ENCODE measurements at regions of chr12 and their contacts with region 1.

Region 1: GRCh38 chr12:27236498-27236897 is 7.6 kb upstream of the STK38L start:
- DNase-seq: no peak

Region 2: DNA sequence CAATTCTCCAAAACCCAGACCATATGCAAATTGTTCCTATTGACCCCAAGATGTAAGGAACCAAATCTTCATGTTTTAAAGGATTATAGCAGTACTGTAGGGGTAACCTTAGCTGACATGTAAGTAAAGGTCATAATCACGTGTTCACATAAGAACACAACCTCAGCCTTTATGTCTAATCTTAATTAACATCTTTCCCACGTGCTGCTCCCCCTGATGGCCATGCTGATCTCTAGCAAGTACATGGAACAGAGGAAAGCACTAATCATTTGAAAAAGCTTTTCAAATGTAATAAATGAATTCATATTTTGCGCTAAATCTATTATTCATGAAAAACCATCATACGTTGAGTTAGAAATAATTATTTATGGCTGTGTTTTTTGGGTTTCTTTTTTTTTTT is 373.0 kb before region 1 on chr12:
- intact Hi-C with region 1: loop called in 1 of 2 experiments (anchors 5 kb)
- DNase-seq: no peak

Region 3: DNA sequence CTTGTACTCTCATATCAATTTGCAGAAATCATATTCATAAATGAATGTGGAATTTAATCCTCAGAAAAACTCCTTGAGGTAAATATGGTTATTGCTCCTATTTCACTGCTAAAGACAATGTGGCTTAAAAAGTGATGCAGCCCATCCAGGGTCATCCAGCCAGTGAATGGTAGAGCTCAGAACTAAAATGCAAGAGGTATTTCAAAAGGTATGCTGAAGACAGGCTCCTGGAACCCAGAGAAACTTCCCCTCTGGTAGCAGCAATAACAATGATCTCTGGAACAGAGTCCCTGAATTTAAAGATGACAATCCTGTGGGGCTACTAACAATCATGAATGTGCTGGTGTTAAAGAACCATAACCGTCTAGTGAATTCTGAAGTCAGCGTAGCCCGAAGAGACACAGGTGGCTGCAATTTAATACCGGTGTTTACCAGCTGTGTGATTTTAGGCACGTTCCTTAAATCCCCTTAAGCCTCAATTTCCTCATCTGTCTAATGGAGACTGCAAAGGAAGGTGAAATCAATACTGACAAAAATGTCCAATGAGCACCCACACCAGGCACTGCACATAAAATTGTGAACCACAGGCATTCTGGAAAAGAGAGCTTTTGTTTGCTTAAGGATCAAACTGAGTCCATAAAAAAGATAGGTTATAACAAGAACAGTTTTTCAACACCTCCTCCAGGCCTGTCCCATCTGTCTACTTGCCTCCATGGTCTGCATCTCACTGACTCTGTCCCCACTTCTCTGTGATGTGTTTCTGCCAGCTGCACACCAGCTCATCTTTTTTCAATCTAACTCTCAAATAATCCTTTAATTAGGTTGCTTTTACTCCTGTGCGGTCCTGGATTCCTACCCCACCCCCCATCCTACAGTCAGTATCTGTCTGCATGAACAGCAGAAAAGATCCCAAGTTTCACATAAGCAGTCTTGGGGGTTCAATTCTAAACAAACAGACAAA is 232.8 kb before region 1 on chr12:
- intact Hi-C with region 1: no loop called
- DNase-seq: no peak

Region 4: GRCh38 chr12:27142101-27142721 is 94.3 kb before region 1 on chr12:
- intact Hi-C with region 1: no loop called
- DNase-seq: peak; percentile 82

Region 5: DNA sequence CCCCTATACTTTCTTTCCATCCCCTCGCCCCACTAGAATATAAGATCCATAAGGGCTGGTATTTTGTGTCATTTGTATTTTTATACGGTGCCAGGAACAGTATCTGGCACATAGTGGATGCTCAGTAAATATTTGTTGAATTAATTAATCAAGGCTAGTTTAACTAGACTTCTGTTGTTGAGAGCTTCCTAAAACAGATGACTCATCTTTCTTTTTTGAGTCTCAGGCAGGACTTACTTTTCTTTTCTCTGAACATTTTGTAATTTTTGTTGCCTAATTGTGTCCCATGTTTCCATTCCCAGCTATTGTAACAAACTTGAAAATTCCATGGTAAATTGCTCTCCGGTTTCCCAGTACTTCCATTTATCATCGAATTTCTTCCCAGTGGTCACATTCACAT is 24.2 kb after region 1 on chr12:
- intact Hi-C with region 1: loop called in 1 of 2 experiments (anchors 2 kb)
- DNase-seq: no peak

Measured in posterior vena cava (tissue), 2 donors.